ENCODE measurements at regions of chr15 and their contacts with region 1.

Region 1: DNA sequence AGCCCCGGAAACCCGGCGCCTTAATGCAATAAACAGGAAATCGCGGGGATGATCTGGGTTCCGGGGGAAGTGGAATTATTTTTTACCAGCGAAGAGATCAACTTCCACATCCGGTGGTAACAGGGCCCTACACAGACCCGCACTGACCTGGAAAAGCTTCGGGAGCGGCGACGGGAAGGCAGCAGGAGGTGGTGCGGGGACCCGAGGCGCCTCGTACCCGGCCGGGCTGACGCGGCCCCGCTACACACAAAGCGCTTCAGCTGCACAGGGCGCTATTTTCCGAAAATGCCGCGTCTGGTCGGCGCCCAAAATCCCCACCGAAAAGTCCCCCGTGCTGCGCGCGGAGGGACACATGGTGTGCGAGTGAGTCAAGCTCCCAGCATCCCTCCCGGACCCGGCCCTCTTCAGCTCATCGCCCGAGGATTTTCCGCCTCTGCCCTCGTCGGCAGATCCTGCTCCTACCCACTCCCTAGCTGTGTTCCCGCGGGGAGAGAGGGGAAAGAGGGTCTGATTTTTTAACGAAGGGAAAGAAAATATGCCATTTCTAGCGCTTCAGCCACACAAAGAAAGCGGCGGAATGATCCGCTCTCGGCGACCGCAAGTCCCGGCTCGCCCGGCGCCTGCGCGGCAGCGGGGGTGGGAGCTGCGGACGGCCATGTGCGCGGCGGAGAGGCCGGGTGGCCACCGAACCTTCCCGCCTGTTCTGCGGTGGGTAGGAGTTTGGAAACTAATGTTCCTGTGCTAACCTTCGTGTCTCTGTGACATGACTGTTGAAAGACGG is at the start of gene GABPB1:
- DNase-seq: peak; percentile 85 to 93 (median 91)
- ATAC-seq: peak; percentile 69
- H3K4me3 ChIP-seq: peak within 1 kb of the TSS; percentile 83
- H3K4me3 Mint-ChIP-seq: peak within 1 kb of the TSS; percentile 83 to 99 (median 98)
- H3K27ac ChIP-seq: peak within 1 kb of the TSS; percentile 97
- H3K27ac Mint-ChIP-seq: peak within 1 kb of the TSS; percentile 98 to 100 (median 99)
- H3K4me1 ChIP-seq: peaks cover 38 to 47% of the 10 kb centered on the region in 2 donors
- H3K4me1 Mint-ChIP-seq: peaks cover 38 to 71% (median 55%) of the 10 kb centered on the region in 7 donors
- H3K27me3 ChIP-seq: no peaks in the 10 kb centered on the region
- H3K27me3 Mint-ChIP-seq: peaks cover 0 to 12% (median 0%) of the 10 kb centered on the region in 5 donors
- total RNA-seq, gene GABPB1: 14.7 to 42.7 (median 16.8) TPM

Region 2: DNA sequence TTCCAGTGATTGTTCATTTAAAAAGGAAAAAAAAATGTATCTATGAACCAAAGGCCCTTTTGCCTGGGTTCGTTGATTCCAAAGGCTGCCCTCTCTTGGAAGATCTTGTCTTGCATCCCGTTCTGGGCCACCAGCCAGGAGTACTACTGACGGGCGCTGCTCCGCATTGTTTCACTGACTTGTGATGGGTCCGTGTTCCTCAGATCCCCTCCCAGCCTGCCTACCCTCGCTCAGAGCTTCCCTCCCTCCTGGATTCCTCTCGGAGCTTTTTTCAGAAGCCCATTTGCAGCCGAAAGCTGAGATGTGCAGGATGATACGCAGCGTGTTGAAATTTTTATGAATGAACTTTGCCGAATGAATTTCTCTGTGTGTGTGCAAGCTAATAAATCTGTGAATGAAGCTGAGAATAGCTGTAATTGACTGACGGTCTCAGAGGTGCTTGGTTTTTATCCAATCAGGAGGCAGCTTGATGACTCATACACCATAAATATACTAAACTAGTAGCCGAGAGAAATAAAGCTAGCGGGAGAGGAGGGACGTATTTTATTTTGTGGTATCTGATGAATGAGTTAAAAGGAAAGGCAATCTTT is 1391.4 kb before region 1 on chr15 and contains the start of gene SHC4:
- CTCF ChIA-PET with region 1: no interaction called
- POLR2A ChIA-PET with region 1: no interaction called
- intact Hi-C with region 1: loop called in 1 of 2 experiments (anchors 10 kb)
- DNase-seq: peak in 4 of 9 donors; percentile 21 to 37 (median 32)
- ATAC-seq: peak; percentile 64
- H3K4me3 ChIP-seq: peak within 1 kb of the TSS; percentile 58
- H3K4me3 Mint-ChIP-seq: peak within 1 kb of the TSS; percentile 68 to 91 (median 84)
- H3K27ac ChIP-seq: no peak within 1 kb of the TSS
- H3K27ac Mint-ChIP-seq: peak within 1 kb of the TSS in 3 of 9 donors; percentile 41 to 68 (median 56)
- H3K4me1 ChIP-seq: peaks cover 17 to 23% of the 10 kb centered on the region in 2 donors
- H3K4me1 Mint-ChIP-seq: peaks cover 15 to 41% (median 21%) of the 10 kb centered on the region in 7 donors
- H3K27me3 ChIP-seq: peaks cover 0 to 18% of the 10 kb centered on the region in 2 donors
- H3K27me3 Mint-ChIP-seq: peaks cover 13 to 65% (median 44%) of the 10 kb centered on the region in 5 donors
- total RNA-seq, gene SHC4: 1.2 TPM in 1 of 5 experiments, not detected in the others

Region 3: DNA sequence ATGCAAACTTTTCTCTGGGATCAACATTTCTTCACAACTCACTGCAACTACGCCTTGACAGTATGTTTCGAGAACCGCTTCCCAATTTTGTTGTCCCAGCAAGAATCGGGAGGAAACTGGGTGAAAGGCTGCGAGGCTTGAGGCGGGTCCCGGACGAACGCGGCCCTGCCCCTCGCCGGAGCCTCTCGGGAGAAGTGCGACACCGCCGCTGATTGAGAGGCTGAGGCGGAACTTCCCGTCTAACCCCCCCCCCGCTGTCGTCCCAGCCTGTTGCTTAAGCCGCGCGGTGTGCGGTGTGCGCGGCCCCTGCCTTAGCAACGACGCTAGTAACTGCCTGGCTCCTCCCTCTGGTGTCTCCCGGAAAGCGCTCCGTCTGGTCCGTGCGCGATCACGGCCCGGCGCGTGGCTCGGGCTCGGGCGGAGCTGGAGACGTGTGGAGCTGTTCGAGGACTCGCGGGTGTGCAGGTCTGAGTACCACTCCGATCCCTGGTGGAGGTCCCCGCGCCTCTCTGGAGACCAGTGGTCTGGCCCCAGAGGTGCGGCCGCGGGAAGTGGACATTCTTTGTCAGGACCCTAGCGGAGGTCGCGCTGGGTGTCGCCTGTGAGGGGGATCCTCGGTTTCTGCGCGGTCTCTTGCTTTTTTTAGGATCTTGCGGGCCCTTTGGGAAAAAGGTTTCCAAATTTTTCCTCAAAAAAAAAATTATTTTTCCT is 734.2 kb before region 1 on chr15 and contains the starts of genes DTWD1 and FAM227B:
- CTCF ChIA-PET with region 1: no interaction called
- POLR2A ChIA-PET with region 1: interaction called, 14 read pairs
- intact Hi-C with region 1: loop called (anchors 1 to 2 kb)
- DNase-seq: peak; percentile 85 to 94 (median 93)
- ATAC-seq: peak; percentile 99
- H3K4me3 ChIP-seq: peak within 1 kb of the TSS; percentile 78
- H3K4me3 Mint-ChIP-seq: peak within 1 kb of the TSS; percentile 85 to 99 (median 96)
- H3K27ac ChIP-seq: peak within 1 kb of the TSS; percentile 88
- H3K27ac Mint-ChIP-seq: peak within 1 kb of the TSS; percentile 93 to 99 (median 98)
- H3K4me1 ChIP-seq: peaks cover 17% of the 10 kb centered on the region in 2 donors
- H3K4me1 Mint-ChIP-seq: peaks cover 19 to 63% (median 48%) of the 10 kb centered on the region in 7 donors
- H3K27me3 ChIP-seq: no peaks in the 10 kb centered on the region
- H3K27me3 Mint-ChIP-seq: no peaks in the 10 kb centered on the region
- total RNA-seq, gene DTWD1: 14.3 to 31.0 (median 20.1) TPM
- total RNA-seq, gene FAM227B: 3.7 to 16.5 (median 8.2) TPM

Region 4: DNA sequence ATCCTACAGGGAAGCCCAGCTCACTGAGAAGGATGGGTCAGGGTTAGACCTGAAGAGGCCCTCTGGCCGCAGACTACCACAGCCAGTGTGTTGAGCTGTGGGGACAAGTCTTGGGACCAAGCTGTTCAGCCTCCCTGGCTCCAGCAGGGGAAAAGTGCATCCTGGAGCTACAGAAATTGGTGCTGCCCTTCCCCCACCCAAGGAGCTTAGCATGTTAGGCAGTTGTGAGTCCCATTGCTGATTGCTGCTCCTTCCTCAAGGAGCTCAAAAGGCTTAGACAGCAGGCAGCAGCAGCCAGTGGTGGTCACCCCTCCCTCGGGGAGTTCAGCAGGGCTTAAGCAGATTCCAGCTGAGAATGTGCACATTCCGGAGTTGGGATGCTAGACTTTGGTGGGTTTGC is 401.6 kb before region 1 on chr15:
- CTCF ChIA-PET with region 1: no interaction called
- POLR2A ChIA-PET with region 1: no interaction called
- intact Hi-C with region 1: no loop called
- DNase-seq: no peak
- ATAC-seq: no peak
- H3K4me3 ChIP-seq: no peak overlapping the region
- H3K4me3 Mint-ChIP-seq: no peak overlapping the region
- H3K27ac ChIP-seq: no peak overlapping the region
- H3K27ac Mint-ChIP-seq: no peak overlapping the region
- H3K4me1 ChIP-seq: no peaks in the 10 kb centered on the region
- H3K4me1 Mint-ChIP-seq: no peaks in the 10 kb centered on the region
- H3K27me3 ChIP-seq: no peaks in the 10 kb centered on the region
- H3K27me3 Mint-ChIP-seq: peaks cover 0 to 20% (median 9%) of the 10 kb centered on the region in 5 donors

Region 5: GRCh38 chr15:50261981-50262380 is 93.0 kb before region 1 on chr15:
- CTCF ChIA-PET with region 1: no interaction called
- POLR2A ChIA-PET with region 1: interaction called, 3 read pairs
- intact Hi-C with region 1: loop called in 1 of 2 experiments (anchors 1 kb)
- DNase-seq: no peak
- ATAC-seq: no peak
- H3K4me3 ChIP-seq: no peak overlapping the region
- H3K4me3 Mint-ChIP-seq: peak overlapping the region in 1 of 10 donors; percentile 44
- H3K27ac ChIP-seq: no peak overlapping the region
- H3K27ac Mint-ChIP-seq: peak overlapping the region in 2 of 9 donors; percentile 14 to 94
- H3K4me1 ChIP-seq: peaks cover 7 to 27% of the 10 kb centered on the region in 2 donors
- H3K4me1 Mint-ChIP-seq: peaks cover 16 to 58% (median 32%) of the 10 kb centered on the region in 7 donors
- H3K27me3 ChIP-seq: no peaks in the 10 kb centered on the region
- H3K27me3 Mint-ChIP-seq: peaks cover 0 to 2% (median 0%) of the 10 kb centered on the region in 5 donors

Region 6: GRCh38 chr15:50424066-50424890 is 69.2 kb after region 1 on chr15 and contains the start of gene USP8:
- CTCF ChIA-PET with region 1: interaction called, 6 read pairs
- POLR2A ChIA-PET with region 1: interaction called, 115 read pairs
- intact Hi-C with region 1: loop called (anchors 1 kb)
- DNase-seq: peak; percentile 88 to 95 (median 93)
- ATAC-seq: peak; percentile 98
- H3K4me3 ChIP-seq: peak within 1 kb of the TSS; percentile 91
- H3K4me3 Mint-ChIP-seq: peak within 1 kb of the TSS; percentile 86 to 100 (median 98)
- H3K27ac ChIP-seq: peak within 1 kb of the TSS; percentile 93
- H3K27ac Mint-ChIP-seq: peak within 1 kb of the TSS; percentile 91 to 99 (median 97)
- H3K4me1 ChIP-seq: peaks cover 8 to 20% of the 10 kb centered on the region in 2 donors
- H3K4me1 Mint-ChIP-seq: peaks cover 23 to 59% (median 34%) of the 10 kb centered on the region in 7 donors
- H3K27me3 ChIP-seq: no peaks in the 10 kb centered on the region
- H3K27me3 Mint-ChIP-seq: no peaks in the 10 kb centered on the region
- total RNA-seq, gene USP8: 52.8 to 61.8 (median 57.1) TPM

Region 7: DNA sequence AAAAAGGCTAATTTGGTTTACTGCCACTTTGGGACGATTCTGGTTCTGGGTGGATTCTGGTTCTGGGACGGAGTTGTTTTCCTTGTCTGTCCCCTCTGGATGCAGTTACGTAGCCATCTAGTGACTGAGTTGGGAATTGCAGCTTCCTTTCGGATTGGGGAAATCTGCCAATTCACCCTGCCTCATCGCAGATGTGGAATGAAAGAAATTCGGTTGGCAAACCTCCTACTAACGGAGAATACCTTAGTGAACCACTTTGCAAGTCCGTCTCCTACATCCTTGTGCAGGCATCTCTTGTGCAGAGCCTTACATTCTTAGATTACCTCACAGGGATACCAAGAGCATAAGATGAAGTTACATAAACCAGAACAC is 521.9 kb after region 1 on chr15:
- CTCF ChIA-PET with region 1: no interaction called
- POLR2A ChIA-PET with region 1: interaction called, 5 read pairs
- intact Hi-C with region 1: loop called in 1 of 2 experiments (anchors 5 kb)
- DNase-seq: peak; percentile 34 to 74 (median 60)
- ATAC-seq: peak; percentile 76
- H3K4me3 ChIP-seq: peak overlapping the region; percentile 37
- H3K4me3 Mint-ChIP-seq: peak overlapping the region in 9 of 10 donors; percentile 20 to 82 (median 69)
- H3K27ac ChIP-seq: no peak overlapping the region
- H3K27ac Mint-ChIP-seq: peak overlapping the region in 5 of 9 donors; percentile 43 to 79 (median 55)
- H3K4me1 ChIP-seq: peaks cover 0 to 5% of the 10 kb centered on the region in 2 donors
- H3K4me1 Mint-ChIP-seq: peaks cover 9 to 49% (median 21%) of the 10 kb centered on the region in 7 donors
- H3K27me3 ChIP-seq: no peaks in the 10 kb centered on the region
- H3K27me3 Mint-ChIP-seq: peaks cover 0 to 19% (median 6%) of the 10 kb centered on the region in 5 donors

Measured in naive thymus-derived CD4-positive, alpha-beta T cell (primary cell).